ENCODE measurements at regions of chr3 and their contacts with region 1.

Region 1: DNA sequence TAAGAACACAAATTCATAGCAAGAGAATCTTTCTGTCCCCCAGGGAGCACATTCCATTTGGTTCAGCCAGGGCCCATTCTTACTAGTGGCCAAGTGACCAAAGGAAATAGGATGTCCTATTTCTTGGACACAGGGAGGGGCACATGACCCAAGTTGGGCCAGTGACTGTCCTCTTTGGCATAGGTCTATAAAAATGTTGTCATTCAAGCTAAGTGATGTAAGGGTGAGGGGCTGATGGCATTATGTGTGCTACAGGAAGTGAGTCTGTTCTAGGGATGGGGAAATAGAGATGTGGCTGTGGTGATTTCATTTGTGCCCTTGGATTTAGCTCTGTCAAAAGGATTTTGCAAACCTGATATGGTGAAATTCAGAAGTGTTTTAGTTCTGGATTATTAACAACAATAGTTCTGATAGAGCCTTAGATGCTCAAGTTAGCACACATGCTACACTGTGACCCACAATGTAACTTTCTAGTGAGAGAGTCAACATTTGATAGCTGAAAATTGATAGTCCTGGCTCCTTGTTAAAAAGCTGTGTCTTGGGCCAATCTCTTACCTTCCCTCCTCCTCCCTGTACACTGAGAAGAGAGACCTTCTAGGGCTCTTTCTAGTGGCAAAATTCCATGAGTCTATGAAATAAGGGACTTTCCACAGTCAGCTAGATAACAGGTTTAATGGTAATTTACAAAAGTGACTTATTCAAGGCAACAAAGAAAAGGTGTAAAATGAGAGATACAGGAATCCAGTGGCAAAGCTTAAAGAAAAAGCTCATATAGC is 117.2 kb downstream of the THRB start:
- DNase-seq: no peak
- ATAC-seq: peak in 1 of 4 donors; percentile 30
- H3K4me3 ChIP-seq: no peak overlapping the region
- H3K27ac ChIP-seq: peak overlapping the region in 1 of 12 donors; percentile 52
- H3K4me1 ChIP-seq: peaks cover 0 to 47% (median 17%) of the 10 kb centered on the region in 12 donors
- H3K27me3 ChIP-seq: no peaks in the 10 kb centered on the region
- CTCF ChIP-seq: no peak
- POLR2A ChIP-seq: no peak

Region 2: DNA sequence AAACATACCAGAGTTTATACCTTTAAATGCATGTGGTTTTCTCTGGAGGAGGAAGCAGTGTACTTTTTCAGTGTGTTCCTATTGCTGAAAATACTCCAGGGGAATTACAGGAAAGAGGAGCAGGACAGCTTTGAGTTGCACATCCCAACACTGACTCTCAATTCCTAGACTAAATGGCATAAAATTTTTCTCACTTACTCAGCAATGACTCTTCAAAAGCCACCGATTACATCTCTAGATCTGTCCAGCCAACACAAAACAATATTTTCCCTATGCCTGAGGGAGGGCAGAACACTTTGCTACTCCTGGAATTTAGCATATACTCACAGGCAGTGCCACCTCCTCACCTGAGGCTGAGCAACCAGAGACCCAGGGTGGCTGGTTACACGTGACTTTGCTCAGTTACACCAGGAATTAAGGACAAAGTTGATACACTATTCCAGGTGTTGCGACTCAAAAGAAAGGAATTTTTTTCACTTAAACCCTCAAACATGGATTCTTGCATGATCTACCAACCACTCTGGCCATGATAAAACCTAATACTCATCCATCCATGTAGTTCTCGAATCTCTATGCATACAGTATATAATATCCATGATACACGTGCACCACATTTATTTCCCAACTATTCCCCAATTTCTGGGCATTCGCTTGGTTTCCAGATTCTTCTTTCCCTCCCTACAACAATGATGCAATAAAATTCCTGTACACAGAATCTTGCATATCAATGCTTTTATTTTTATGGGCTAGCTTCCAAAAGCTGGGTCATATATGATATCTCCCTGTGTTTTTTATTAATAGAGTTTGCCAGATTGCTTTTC is 77.4 kb before region 1 on chr3:
- intact Hi-C with region 1: no loop called
- DNase-seq: no peak
- ATAC-seq: no peak
- H3K4me3 ChIP-seq: no peak overlapping the region
- H3K27ac ChIP-seq: no peak overlapping the region
- H3K4me1 ChIP-seq: peaks cover 0 to 14% (median 5%) of the 10 kb centered on the region in 12 donors
- H3K27me3 ChIP-seq: no peaks in the 10 kb centered on the region
- CTCF ChIP-seq: no peak
- POLR2A ChIP-seq: no peak

Region 3: DNA sequence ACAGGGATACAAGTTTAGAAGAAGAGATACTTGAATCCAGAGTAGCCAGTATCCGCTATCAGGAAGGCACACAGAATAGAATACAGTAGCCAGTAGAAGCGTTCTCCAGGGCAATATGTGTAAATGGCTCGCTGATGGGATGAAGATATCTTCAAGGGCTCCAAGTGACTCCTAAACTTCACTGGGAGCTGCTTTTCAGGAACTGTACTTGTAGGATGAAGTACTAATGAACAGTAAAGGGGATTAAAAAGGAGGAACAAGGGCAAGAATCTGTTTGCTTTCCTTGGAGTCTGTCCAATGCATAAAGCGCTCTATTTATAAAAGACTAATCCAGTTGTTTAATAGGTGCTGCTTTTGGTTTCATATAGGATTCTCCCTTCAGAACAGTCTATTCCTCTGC is 38.8 kb after region 1 on chr3:
- intact Hi-C with region 1: loop called in 1 of 10 experiments (anchors 5 kb)
- DNase-seq: no peak
- ATAC-seq: no peak
- H3K4me3 ChIP-seq: no peak overlapping the region
- H3K27ac ChIP-seq: no peak overlapping the region
- H3K4me1 ChIP-seq: peaks cover 0 to 40% (median 19%) of the 10 kb centered on the region in 12 donors
- H3K27me3 ChIP-seq: no peaks in the 10 kb centered on the region
- CTCF ChIP-seq: no peak
- POLR2A ChIP-seq: no peak

Region 4: DNA sequence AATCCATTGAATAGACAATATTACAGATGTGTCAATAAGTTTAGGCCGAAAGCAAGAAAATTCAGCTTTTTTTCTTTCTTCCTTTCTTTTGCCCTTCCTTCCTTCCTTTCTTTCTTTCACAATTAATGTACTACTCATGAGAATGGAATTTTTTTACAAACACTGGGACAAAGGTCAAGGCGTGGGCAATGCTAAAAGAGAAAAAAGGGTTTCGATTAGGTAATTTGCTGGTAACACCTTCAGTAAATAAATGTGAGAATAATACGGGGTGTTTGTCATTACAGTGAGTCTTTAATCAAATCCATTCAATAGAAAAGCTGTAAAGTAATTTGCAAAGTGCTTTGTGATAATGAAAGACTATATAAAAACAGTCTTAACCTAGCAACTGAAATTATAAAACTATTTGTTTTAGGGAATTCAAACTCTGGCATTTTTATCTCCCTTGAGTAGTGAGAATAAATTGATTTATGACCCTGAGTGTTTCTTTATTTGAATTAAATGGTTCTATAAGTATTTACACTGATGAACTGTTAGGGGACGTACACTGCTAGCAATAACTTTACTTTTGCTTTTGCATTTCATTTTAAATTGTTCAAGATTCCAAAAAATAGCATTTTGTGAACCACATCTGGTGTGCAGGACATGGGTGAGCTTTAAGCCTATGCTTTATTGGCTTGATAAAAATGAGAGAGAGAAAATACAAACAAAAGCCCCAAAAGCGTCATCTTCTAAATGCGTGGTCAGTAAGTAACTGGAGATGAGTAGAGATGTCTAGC is 221.5 kb after region 1 on chr3:
- intact Hi-C with region 1: no loop called
- DNase-seq: no peak
- ATAC-seq: no peak
- H3K4me3 ChIP-seq: no peak overlapping the region
- H3K27ac ChIP-seq: no peak overlapping the region
- H3K4me1 ChIP-seq: no peaks in the 10 kb centered on the region
- H3K27me3 ChIP-seq: no peaks in the 10 kb centered on the region
- CTCF ChIP-seq: no peak
- POLR2A ChIP-seq: no peak

Measured in heart left ventricle (tissue), 16 donors.